Breast epithelium (tissue), 4 donors: ENCODE measurements at regions of chr11 and their contacts with region 1.

Region 1: GRCh38 chr11:116879800-116880625 is 42.6 kb upstream of the APOA1 start:
- DNase-seq: no peak
- H3K4me3 ChIP-seq: no peak overlapping the region
- H3K27ac ChIP-seq: no peak overlapping the region
- H3K4me1 ChIP-seq: no peaks in the 10 kb centered on the region
- H3K27me3 ChIP-seq: no peaks in the 10 kb centered on the region
- CTCF ChIP-seq: peak in 2 of 3 donors; percentile 49 to 53
- POLR2A ChIP-seq: no peak

Region 2: GRCh38 chr11:116563028-116563711 is 316.8 kb before region 1 on chr11:
- intact Hi-C with region 1: no loop called
- DNase-seq: peak in 1 of 2 donors; percentile 75
- H3K4me3 ChIP-seq: no peak overlapping the region
- H3K27ac ChIP-seq: peak overlapping the region in 1 of 2 donors; percentile 50
- H3K4me1 ChIP-seq: no peaks in the 10 kb centered on the region
- H3K27me3 ChIP-seq: no peaks in the 10 kb centered on the region
- CTCF ChIP-seq: no peak
- POLR2A ChIP-seq: no peak

Region 3: GRCh38 chr11:117226388-117227385 is 346.7 kb after region 1 on chr11:
- intact Hi-C with region 1: loop called (anchors 10 kb)
- DNase-seq: no peak
- H3K4me3 ChIP-seq: no peak overlapping the region
- H3K27ac ChIP-seq: no peak overlapping the region
- H3K4me1 ChIP-seq: peaks cover 3 to 8% of the 10 kb centered on the region in 2 donors
- H3K27me3 ChIP-seq: no peaks in the 10 kb centered on the region
- CTCF ChIP-seq: peak; percentile 38 to 88 (median 86)
- POLR2A ChIP-seq: no peak